H1 (cell line): ENCODE measurements at regions of chr19 and their contacts with region 1.

Region 1: DNA sequence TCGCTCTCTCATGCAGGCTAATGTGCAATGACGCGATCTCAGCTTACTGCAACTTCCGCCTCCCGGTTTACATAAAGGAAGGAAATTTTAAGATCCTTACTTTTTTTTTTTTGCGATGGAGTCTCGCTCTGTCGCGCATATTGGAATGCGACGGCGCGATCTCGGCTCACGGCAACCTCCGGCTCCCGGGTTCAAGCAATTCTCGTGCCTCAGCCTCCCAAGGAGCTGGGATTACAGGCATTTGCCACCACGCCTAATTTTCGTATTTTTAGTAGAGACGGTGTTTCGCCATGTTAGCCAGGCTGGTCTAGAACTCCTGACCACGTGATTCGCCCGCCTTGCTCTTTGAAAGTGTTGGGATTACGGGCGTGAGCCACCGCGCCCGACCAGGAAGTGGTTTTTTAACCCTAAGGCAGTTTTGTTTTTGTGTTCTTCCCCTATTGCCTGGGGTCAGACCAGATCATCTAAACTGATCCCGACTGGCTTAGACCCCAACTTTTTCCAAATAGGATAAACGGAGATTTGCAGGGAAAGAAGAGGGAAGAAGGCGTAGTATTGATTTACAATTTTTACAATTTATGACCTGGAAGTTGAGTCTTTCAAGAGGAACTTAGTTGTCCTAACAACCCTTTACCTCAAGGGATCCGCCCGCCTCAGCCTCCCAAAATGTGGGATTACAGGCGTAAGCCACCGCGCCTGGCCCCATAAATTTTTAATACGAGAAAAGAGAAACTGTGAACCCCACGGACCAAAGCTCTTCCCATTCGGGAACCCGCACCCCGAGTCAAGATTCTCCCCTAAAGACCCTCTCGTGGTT is 142.0 kb downstream of the ZNF737 start:
- DNase-seq: peak in 1 of 2 experiments; percentile 61
- H3K4me3 ChIP-seq: peak overlapping the region; percentile 86 to 100 (median 100)
- H3K27ac ChIP-seq: peak overlapping the region; percentile 100
- H3K4me1 ChIP-seq: no peaks in the 10 kb centered on the region
- H3K27me3 ChIP-seq: no peaks in the 10 kb centered on the region
- CTCF ChIP-seq: no peak
- EP300 ChIP-seq: no peak
- POLR2A ChIP-seq: no peak; a peak in 2 of 3 replicates
- RAD21 ChIP-seq: no peak

Region 2: GRCh38 chr19:20237761-20238623 is 185.6 kb before region 1 on chr19:
- CTCF ChIA-PET with region 1: no interaction called
- POLR2A ChIA-PET with region 1: interaction called, 25 read pairs
- DNase-seq: peak; percentile 78 to 97
- H3K4me3 ChIP-seq: peak overlapping the region; percentile 86 to 98 (median 92)
- H3K27ac ChIP-seq: peak overlapping the region; percentile 94
- H3K4me1 ChIP-seq: peaks cover 0 to 13% (median 4%) of the 10 kb centered on the region in 4 experiments; a peak in 6 of 7 replicates
- H3K27me3 ChIP-seq: no peaks in the 10 kb centered on the region
- CTCF ChIP-seq: no peak; a peak in 1 of 4 replicates
- EP300 ChIP-seq: no peak
- POLR2A ChIP-seq: peak; percentile 90 to 96
- RAD21 ChIP-seq: no peak

Region 3: DNA sequence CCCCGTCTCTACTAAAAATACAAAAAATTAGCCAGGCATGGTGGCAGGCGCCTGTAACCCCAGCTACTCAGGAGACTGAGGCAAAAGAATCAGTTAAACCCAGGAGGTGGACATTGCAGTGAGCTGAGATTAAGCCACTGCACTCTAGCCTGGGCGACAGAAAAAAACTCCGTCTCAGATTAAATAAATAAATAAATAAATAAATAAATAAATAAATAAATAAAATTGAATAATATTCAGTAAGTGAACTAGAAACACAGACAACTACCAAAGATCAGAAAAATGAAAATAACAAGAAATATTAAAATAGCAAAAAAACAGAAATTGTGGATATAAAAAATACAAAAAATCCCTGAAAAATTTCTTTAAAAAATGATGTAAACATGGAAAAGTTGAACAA is 84.1 kb before region 1 on chr19:
- CTCF ChIA-PET with region 1: no interaction called
- POLR2A ChIA-PET with region 1: no interaction called
- DNase-seq: no peak
- H3K4me3 ChIP-seq: no peak overlapping the region
- H3K27ac ChIP-seq: no peak overlapping the region
- H3K4me1 ChIP-seq: no peaks in the 10 kb centered on the region
- H3K27me3 ChIP-seq: peaks cover 0 to 1% (median 0%) of the 10 kb centered on the region in 4 experiments; a peak in 1 of 7 replicates
- CTCF ChIP-seq: no peak
- EP300 ChIP-seq: no peak
- POLR2A ChIP-seq: no peak
- RAD21 ChIP-seq: no peak

Region 4: DNA sequence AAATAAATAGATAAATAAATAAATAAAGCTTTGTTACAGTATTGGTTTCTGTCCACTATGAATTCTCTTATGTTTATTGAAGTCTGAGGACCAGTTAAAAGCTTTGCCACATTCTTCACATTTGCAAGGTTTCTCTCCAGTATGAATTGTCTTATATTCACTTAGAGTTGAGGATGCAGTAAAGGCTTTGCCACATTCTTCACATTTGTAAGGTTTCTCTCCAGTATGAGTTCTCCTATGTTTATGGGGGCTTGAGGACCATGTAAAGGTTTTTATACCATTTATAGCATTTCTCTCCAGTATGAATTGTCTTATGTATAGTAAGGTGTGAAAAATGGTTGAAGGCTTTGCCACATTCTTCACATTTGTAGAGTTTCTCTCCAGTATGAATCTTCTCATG is 26.3 kb before region 1 on chr19:
- CTCF ChIA-PET with region 1: no interaction called
- POLR2A ChIA-PET with region 1: interaction called, 10 read pairs
- DNase-seq: no peak
- H3K4me3 ChIP-seq: no peak overlapping the region; a peak in 1 of 8 replicates
- H3K27ac ChIP-seq: no peak overlapping the region
- H3K4me1 ChIP-seq: no peaks in the 10 kb centered on the region
- H3K27me3 ChIP-seq: no peaks in the 10 kb centered on the region
- CTCF ChIP-seq: no peak
- EP300 ChIP-seq: no peak
- POLR2A ChIP-seq: no peak
- RAD21 ChIP-seq: no peak

Region 5: GRCh38 chr19:20513179-20513934 is 89.8 kb after region 1 on chr19:
- CTCF ChIA-PET with region 1: no interaction called
- POLR2A ChIA-PET with region 1: interaction called, 10 read pairs
- DNase-seq: no peak
- H3K4me3 ChIP-seq: no peak overlapping the region
- H3K27ac ChIP-seq: no peak overlapping the region
- H3K4me1 ChIP-seq: peaks cover 0 to 6% (median under 1%) of the 10 kb centered on the region in 4 experiments; a peak in 1 of 7 replicates
- H3K27me3 ChIP-seq: no peaks in the 10 kb centered on the region
- CTCF ChIP-seq: peak in 1 of 3 experiments; percentile 11; a peak in 1 of 4 replicates
- EP300 ChIP-seq: no peak
- POLR2A ChIP-seq: no peak
- RAD21 ChIP-seq: peak; percentile 48 to 52